ENCODE measurements at regions of chr4 and their contacts with region 1.

Region 1: GRCh38 chr4:153318696-153319320 is 25.7 kb upstream of the MND1 start:
- DNase-seq: peak; percentile 39
- ATAC-seq: peak; percentile 93
- H3K4me3 ChIP-seq: no peak overlapping the region
- H3K27ac ChIP-seq: no peak overlapping the region
- H3K4me1 ChIP-seq: no peaks in the 10 kb centered on the region
- H3K27me3 ChIP-seq: no peaks in the 10 kb centered on the region
- CTCF ChIP-seq: peak; percentile 68 to 85 (median 74); a peak in 5 of 6 replicates
- POLR2A ChIP-seq: no peak
- RAD21 ChIP-seq: peak; percentile 83

Region 2: GRCh38 chr4:152850377-152850776 is 468.4 kb before region 1 on chr4:
- CTCF ChIA-PET with region 1: interaction called, 3 read pairs
- POLR2A ChIA-PET with region 1: no interaction called
- RAD21 ChIA-PET with region 1: no interaction called
- intact Hi-C with region 1: loop called (anchors 5 kb)
- DNase-seq: no peak
- ATAC-seq: no peak
- H3K4me3 ChIP-seq: no peak overlapping the region
- H3K27ac ChIP-seq: no peak overlapping the region
- H3K4me1 ChIP-seq: no peaks in the 10 kb centered on the region
- H3K27me3 ChIP-seq: no peaks in the 10 kb centered on the region
- CTCF ChIP-seq: no peak
- POLR2A ChIP-seq: no peak
- RAD21 ChIP-seq: no peak

Region 3: DNA sequence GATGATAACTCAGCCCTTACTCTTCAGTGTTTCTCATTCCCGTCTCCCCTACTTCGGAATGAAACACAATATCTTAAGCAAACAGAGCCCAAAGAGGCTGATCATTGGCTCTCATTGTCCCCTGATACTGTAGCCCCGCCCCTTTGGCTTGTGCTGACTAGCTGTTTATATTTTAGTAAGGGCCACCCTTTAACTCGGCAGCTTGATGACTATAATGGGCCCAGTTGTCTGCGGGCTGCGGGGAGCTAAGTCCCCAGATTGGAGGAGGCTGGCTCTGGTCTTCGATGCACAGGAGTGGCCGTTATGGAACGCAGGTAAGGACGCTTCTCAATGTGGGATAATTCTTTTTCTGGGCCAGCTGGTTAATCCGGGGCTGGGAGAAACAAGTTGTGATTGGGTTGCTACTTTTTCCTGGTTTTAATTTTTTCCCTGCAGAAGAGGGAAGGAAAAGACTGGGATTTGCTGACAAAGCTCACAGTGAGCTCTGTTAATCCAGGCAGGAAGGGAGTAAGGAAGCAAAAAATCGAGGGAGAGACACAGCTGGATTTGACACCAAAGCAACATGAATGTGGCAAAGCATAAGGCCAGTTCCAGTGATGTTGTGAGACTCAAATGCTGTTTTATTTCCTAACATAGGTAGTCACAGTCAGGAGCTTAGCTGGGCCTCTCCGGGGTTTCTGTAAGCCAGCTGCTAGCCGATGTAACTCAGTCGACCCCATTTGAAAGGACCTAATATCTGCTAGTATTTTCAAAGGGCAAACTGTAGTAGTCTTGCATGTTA is 114.4 kb before region 1 on chr4 and contains the start of gene TRIM2:
- CTCF ChIA-PET with region 1: interaction called, 3 read pairs
- POLR2A ChIA-PET with region 1: interaction called, 3 read pairs
- RAD21 ChIA-PET with region 1: no interaction called
- intact Hi-C with region 1: loop called (anchors 1 kb)
- DNase-seq: peak; percentile 86
- ATAC-seq: peak; percentile 73
- H3K4me3 ChIP-seq: peak within 1 kb of the TSS; percentile 64 to 69
- H3K27ac ChIP-seq: peak within 1 kb of the TSS; percentile 86
- H3K4me1 ChIP-seq: peaks cover 21 to 49% of the 10 kb centered on the region in 2 experiments
- H3K27me3 ChIP-seq: no peaks in the 10 kb centered on the region
- CTCF ChIP-seq: no peak
- POLR2A ChIP-seq: peak; percentile 82
- RAD21 ChIP-seq: no peak
- total RNA-seq, gene TRIM2: 41.4 TPM

Region 4: GRCh38 chr4:153232768-153233167 is 86.0 kb before region 1 on chr4:
- CTCF ChIA-PET with region 1: interaction called, 6 read pairs
- POLR2A ChIA-PET with region 1: no interaction called
- RAD21 ChIA-PET with region 1: no interaction called
- intact Hi-C with region 1: loop called (anchors 2 kb)
- DNase-seq: peak; percentile 27
- ATAC-seq: peak; percentile 82
- H3K4me3 ChIP-seq: no peak overlapping the region
- H3K27ac ChIP-seq: peak overlapping the region; percentile 63; the same call in 1 of the 2 replicates
- H3K4me1 ChIP-seq: peaks cover 37% of the 10 kb centered on the region in 2 experiments
- H3K27me3 ChIP-seq: no peaks in the 10 kb centered on the region
- CTCF ChIP-seq: peak; percentile 50 to 55 (median 52)
- POLR2A ChIP-seq: no peak
- RAD21 ChIP-seq: peak; percentile 67

Region 5: DNA sequence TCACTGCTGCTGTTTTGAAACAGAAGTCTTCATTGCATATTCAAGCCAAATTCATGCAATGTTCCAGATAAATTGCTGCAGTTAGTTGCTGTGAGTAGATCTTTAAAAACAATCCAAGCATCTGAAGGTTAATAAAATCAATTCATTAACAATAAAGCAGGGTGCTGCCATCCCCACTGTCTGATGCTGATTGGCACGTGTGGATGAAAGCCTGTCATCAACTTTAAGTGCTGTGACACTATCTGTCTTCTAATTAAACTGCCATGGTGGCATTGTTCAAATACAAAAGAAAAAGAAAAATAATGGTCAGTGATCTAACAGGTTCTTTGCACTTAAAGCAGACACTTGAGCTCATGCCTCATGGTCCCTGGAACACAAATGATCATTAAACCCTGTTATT is 37.3 kb before region 1 on chr4:
- CTCF ChIA-PET with region 1: no interaction called
- POLR2A ChIA-PET with region 1: no interaction called
- RAD21 ChIA-PET with region 1: no interaction called
- intact Hi-C with region 1: no loop called
- DNase-seq: no peak
- ATAC-seq: no peak
- H3K4me3 ChIP-seq: no peak overlapping the region
- H3K27ac ChIP-seq: no peak overlapping the region
- H3K4me1 ChIP-seq: no peaks in the 10 kb centered on the region
- H3K27me3 ChIP-seq: no peaks in the 10 kb centered on the region
- CTCF ChIP-seq: no peak
- POLR2A ChIP-seq: no peak
- RAD21 ChIP-seq: no peak